Heart right ventricle (tissue), 16 donors: ENCODE measurements at regions of chr7 and their contacts with region 1.

Region 1: DNA sequence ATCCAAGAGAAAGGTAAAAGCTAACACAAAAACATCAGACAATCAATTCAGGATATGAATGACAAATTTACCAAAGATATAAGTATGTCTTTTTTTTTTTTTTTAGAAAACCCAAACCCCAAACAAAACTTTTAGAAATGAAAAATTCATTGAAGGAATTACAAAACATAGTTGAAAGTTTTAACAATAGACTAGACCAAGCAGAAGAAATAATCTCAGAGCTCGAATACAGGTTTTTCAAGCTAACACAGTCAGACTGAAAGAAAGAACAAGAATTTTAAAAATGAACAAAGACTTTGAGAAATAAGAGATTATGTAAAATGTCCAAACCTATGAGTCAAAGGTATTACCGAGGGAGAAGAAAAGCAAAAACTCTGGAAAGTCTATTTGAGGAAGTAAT is 198.3 kb upstream of the SLC26A5 start:
- DNase-seq: no peak
- ATAC-seq: no peak
- H3K4me3 ChIP-seq: no peak overlapping the region
- H3K27ac ChIP-seq: no peak overlapping the region
- H3K4me1 ChIP-seq: no peaks in the 10 kb centered on the region
- H3K27me3 ChIP-seq: no peaks in the 10 kb centered on the region
- CTCF ChIP-seq: no peak

Region 2: DNA sequence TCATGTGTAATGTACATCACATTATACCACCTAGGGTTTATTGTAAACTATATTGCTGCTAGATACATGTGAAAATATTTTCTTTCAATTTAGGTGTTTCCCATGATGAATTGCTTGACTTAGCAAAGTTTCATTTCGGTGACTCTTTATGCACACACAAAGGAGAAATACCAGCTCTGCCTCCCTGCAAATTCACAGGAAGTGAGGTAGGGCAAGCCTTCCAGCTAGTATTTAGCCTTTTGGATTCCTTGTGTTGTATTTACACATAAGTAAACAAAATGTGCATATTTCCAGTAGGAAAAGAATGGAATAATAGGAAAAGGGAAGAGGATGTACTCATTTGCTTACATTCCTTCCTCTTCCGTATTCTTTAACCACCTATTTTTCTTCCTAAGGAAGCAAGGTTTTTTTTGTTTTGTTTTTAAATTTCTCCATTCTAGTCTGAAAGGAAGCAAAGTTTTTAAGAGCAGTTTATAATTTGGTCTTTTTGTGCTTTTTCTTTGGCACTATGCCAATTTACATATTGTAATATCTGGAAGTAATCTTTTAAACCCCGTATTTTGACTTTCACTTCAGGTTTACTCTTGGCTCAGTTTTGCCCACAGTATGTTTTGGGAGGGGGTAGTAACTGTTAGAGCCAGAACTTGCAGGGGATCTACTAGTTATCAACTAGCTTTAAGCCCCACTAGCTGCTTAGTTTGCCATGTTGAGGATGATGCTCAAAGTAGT is 336.7 kb before region 1 on chr7:
- intact Hi-C with region 1: no loop called
- DNase-seq: no peak
- ATAC-seq: no peak
- H3K4me3 ChIP-seq: no peak overlapping the region
- H3K27ac ChIP-seq: peak overlapping the region in 1 of 10 donors; percentile 11
- H3K4me1 ChIP-seq: peaks cover 0 to 9% (median 0%) of the 10 kb centered on the region in 9 donors
- H3K27me3 ChIP-seq: no peaks in the 10 kb centered on the region
- CTCF ChIP-seq: no peak

Region 3: GRCh38 chr7:103504505-103505135 is 139.7 kb before region 1 on chr7:
- intact Hi-C with region 1: no loop called
- DNase-seq: no peak
- ATAC-seq: no peak
- H3K4me3 ChIP-seq: no peak overlapping the region
- H3K27ac ChIP-seq: no peak overlapping the region
- H3K4me1 ChIP-seq: no peaks in the 10 kb centered on the region
- H3K27me3 ChIP-seq: peaks cover 0 to 14% (median 0%) of the 10 kb centered on the region in 7 donors
- CTCF ChIP-seq: no peak

Region 4: GRCh38 chr7:103660455-103661371 is 16.4 kb after region 1 on chr7:
- intact Hi-C with region 1: loop called in 1 of 10 experiments (anchors 2 kb)
- DNase-seq: no peak
- ATAC-seq: no peak
- H3K4me3 ChIP-seq: no peak overlapping the region
- H3K27ac ChIP-seq: no peak overlapping the region
- H3K4me1 ChIP-seq: no peaks in the 10 kb centered on the region
- H3K27me3 ChIP-seq: no peaks in the 10 kb centered on the region
- CTCF ChIP-seq: no peak

Region 5: DNA sequence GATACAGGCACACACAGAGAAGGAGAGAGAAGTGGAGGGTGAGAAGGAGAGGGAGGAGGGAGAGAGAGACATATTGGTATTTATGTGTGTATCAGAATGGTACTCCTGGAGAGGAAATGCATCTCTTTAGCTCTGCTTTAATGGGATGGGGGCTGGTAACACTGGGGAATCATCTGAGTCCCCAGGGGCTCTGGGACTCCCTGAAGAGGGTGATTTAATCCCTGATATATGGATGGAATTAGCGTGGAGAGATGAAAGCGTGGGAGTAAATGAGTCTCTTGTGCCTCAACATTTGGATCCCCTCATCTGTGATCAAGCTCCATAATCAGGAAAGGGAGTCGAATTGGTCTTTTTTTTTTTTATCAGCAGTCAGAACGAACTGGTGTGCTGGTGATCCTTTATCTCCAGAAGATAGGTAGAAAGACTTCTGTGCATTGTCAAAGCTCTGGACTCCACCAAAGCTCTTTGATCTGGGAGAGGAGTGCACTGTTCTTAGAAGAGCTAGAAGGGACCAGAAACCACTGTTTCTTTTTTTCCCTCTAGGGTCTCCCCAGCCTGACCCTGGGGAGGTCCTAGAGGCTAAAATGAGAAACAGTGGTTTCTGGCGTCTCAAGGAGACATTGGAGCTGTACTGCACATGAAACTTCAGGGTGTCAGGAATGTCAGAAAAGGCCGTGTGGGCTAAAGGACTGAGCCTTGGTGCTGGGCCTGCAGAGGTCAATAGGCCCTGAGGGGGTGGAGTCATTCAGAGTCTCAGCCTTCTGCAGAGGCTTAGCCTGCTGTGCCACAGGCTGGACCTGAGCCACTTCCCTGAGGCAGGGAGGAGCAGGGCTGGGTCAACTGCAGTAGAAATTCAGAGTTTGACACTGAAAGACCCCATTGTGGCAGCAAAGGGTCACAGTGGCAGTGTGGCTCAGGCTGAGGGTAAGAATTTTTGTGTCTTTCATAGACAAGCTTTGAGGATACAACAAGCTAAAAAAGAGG is 36.1 kb after region 1 on chr7:
- intact Hi-C with region 1: no loop called
- DNase-seq: no peak
- ATAC-seq: peak in 1 of 8 donors; percentile 52
- H3K4me3 ChIP-seq: no peak overlapping the region
- H3K27ac ChIP-seq: no peak overlapping the region
- H3K4me1 ChIP-seq: no peaks in the 10 kb centered on the region
- H3K27me3 ChIP-seq: no peaks in the 10 kb centered on the region
- CTCF ChIP-seq: no peak